ENCODE measurements at regions of chr4 and their contacts with region 1.

Region 1: DNA sequence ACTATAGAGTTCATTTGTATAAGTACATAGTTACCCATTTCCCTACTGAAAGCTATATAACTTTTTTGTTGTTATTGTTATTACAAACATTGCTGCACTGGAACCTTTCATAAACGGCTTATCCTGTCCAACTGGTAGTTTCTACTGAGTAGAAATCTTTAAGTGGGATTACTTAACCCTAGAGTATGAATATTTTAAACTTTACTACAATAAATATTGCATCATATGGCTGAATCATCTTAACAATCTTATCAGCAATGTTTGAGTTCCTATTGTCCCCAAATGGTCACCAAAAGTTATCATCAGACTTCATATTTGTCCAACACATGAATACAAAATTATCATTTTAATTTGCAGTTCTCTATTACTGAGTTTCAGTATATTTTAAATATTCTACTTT is 40.5 kb downstream of the LCORL start:
- DNase-seq: no peak
- ATAC-seq: no peak

Region 2: GRCh38 chr4:17557880-17558279 is 423.2 kb before region 1 on chr4:
- intact Hi-C with region 1: loop called (anchors 5 kb)
- DNase-seq: no peak
- ATAC-seq: no peak

Region 3: DNA sequence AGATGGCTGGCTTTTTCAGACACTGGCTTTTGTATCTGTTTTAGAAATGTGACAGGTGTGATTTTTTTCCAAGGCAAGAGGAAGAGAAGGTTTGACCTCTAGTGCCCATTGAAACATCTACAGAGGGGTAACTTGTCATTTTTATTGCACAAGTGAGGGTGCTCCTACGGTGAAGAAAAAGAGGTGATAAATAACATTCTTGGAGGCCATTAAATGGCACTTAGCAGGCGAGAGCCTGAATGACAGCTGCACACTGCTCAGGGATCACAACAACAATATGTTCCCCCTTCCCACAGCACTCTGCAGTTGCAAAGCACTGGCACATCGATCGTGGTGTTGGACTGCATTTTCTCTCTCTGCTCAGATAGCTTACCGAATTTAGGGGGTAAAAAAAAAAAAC is 222.6 kb before region 1 on chr4:
- intact Hi-C with region 1: no loop called
- DNase-seq: no peak
- ATAC-seq: no peak

Region 4: GRCh38 chr4:18033111-18034085 is 52.3 kb after region 1 on chr4:
- intact Hi-C with region 1: no loop called
- DNase-seq: no peak
- ATAC-seq: peak; percentile 34

Region 5: DNA sequence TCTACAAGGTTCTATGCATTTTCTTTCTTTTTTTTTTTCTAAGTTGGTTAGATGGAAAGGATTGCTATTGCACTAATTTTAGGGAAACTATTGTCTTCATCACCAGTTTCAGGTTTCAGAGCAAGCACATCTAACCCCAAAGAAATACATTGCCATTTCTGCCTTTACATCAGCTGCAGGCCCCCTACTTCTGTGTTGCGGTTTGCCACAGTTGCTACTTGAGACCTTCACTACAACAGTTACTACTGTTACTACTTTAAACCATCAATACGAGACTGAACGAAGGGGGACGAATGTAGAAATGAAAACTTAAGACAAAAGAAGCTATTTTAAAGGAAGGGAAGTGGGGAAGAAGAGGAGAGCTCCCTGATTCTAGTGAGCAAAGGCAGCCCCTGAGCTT is 297.2 kb after region 1 on chr4:
- intact Hi-C with region 1: no loop called
- DNase-seq: no peak
- ATAC-seq: no peak